ENCODE measurements at regions of chr15 and their contacts with region 1.

Region 1: DNA sequence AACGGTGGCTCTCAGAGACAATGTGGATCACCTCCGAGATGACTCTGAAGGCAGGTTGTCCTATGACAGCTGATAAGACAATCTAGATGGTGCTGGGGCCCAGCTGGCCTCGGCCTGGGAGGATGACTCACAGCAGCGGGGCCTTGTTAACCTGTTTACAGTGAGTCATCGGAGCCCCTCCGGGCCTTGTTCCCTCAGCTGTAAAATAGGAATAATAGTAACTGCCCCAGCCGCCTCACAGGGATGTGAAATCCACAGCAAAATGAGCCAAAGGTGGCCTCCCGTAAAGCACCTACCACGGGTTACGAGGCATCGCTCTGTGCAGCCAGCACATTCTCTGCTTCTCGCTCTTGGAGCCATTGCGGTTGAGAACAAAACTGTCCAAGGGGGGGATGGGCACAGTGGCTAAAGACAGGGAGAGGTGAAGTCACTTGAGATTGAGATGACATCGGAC is 88.6 kb upstream of the RASGRF1 start:
- ATAC-seq: peak in 6 of 8 experiments; percentile 48 to 99 (median 99)
- H3K4me3 ChIP-seq: no peak overlapping the region
- H3K27ac ChIP-seq: peak overlapping the region; percentile 67 to 80
- H3K4me1 ChIP-seq: peaks cover 14 to 17% of the 10 kb centered on the region in 2 donors

Region 2: GRCh38 chr15:79004336-79004735 is 174.8 kb before region 1 on chr15:
- in situ Hi-C with region 1: no loop called
- ATAC-seq: peak in 3 of 8 experiments; percentile 65 to 82 (median 74)
- H3K4me3 ChIP-seq: no peak overlapping the region
- H3K27ac ChIP-seq: no peak overlapping the region
- H3K4me1 ChIP-seq: peaks cover 6 to 25% of the 10 kb centered on the region in 2 donors

Region 3: DNA sequence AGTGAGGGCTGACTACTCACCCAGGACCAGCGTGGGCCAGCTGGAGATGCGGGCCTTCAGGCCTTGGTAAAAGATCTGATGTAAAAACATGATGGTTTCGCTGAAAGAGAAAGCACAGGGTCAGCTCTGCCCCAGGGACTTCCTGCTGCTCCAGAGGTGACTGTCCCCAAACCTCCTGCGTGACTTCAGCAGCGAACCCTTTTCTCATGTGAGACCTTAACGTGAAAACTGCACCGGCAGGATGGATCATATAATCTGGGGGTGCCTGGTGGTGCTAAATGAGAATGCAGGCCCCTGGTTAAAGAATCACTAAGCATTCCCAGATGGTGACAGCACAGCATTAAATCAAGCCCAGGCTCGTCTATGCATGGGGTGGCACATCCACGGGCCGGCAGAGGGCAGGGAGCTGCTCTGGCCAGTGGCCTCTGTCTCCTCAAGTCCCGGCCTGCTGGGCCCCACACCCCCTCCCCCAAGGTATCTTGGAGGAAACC is 144.0 kb before region 1 on chr15:
- in situ Hi-C with region 1: loop called in 3 of 9 experiments (anchors 5 to 25 kb)
- ATAC-seq: peak in 7 of 8 experiments; percentile 22 to 84 (median 57)
- H3K4me3 ChIP-seq: no peak overlapping the region
- H3K27ac ChIP-seq: no peak overlapping the region
- H3K4me1 ChIP-seq: no peaks in the 10 kb centered on the region